ENCODE measurements at regions of chr3 and their contacts with region 1.

Region 1: GRCh38 chr3:62332835-62333244 is 40.5 kb downstream of the FEZF2 start:
- DNase-seq: no peak
- H3K4me3 ChIP-seq: no peak overlapping the region
- H3K27ac ChIP-seq: no peak overlapping the region
- H3K27me3 ChIP-seq: no peaks in the 10 kb centered on the region
- CTCF ChIP-seq: peak; percentile 56

Region 2: DNA sequence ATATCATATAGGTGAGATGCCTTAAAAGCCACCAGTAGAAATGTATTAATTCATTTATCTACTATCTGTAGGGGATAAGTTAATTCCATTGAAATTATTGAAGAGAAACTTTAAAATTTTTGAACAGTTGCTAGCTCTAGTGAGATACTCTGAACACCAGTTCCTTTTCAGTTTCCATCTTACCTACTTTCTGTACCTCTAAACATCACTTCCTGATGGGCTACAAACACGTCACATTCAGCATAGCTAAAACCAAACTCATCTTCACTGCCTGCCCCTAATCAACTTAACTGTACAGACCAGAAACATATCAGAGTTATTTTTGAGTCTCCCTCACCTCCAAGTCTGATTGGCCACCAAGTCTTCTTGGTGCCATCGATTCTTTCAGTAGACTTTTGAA is 48.4 kb before region 1 on chr3:
- CTCF ChIA-PET with region 1: interaction called, 11 read pairs
- POLR2A ChIA-PET with region 1: no interaction called
- DNase-seq: no peak
- H3K4me3 ChIP-seq: no peak overlapping the region
- H3K27ac ChIP-seq: no peak overlapping the region
- H3K27me3 ChIP-seq: no peaks in the 10 kb centered on the region
- CTCF ChIP-seq: no peak

Region 3: DNA sequence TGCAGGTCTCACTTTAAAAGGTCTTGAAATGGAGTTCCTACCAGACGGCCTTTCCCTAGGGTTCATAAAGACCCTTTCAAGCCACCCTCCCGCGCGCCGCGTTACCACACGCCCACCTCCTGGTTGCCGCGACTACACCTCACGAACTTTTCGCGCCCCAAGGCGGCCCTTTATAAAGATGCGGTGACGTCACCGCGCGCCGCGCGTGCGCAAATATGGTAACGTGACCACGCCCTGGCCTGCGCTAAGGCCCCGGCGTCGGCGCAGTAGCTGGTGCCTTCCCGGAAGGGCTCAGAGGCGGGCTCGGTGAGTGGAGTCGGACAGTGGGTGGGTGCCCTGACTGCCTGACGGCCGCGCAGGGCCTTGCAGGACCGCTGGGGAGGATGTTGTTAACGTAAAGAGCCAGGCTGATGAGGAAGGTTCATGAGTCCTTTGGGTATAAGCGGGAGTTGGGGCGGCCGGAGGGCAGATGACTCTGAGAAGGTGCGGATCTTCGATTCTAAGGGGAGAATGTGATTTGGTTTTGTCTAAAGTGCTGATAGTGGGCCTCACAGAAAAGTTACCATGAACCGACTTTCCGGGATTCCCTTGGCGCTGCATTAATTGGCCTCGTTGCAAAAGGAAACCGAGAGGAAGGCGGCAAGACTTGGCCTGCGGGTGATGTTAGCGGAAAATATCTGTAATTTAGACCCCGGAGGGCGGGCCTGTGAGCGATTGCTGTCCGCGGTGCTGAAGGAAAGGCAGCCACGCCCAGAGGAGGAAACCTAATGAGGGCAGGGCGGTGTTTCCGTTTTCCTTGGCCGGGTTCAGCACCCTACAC is 13.9 kb before region 1 on chr3:
- CTCF ChIA-PET with region 1: interaction called, 10 read pairs
- POLR2A ChIA-PET with region 1: no interaction called
- DNase-seq: peak; percentile 55
- H3K4me3 ChIP-seq: peak overlapping the region; percentile 84
- H3K27ac ChIP-seq: peak overlapping the region; percentile 54
- H3K27me3 ChIP-seq: no peaks in the 10 kb centered on the region
- CTCF ChIP-seq: no peak

Region 4: DNA sequence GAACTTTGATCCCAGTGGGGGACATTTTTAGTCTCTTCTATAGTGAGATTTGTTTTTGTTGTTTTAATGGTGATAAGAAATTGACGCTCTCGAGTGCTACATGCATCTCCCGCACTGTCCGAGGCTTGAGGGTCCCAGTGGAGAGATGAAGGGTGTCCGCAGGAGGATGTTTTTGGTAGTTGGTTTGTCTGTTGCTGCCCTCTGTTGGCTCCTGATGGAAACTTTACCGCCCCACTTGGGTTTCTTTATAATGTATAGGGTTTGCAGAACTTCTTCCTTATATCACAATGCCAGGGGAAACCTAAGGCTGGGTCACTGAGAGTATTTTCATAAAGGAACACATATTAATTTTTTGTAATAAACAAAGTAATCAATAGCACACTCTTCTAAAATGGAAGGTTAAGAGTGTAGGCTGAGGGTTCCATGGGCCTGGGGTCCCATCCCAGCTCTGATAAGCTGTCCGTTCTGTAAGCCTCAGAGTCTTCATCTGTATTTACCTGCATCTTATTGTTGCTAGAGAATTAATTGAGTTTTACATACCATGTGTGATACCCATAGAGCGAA is 225.8 kb after region 1 on chr3:
- CTCF ChIA-PET with region 1: interaction called, 75 read pairs
- POLR2A ChIA-PET with region 1: no interaction called
- DNase-seq: no peak
- H3K4me3 ChIP-seq: no peak overlapping the region
- H3K27ac ChIP-seq: no peak overlapping the region
- H3K27me3 ChIP-seq: no peaks in the 10 kb centered on the region
- CTCF ChIP-seq: peak; percentile 68

Measured in AG04450 (cell line).